ENCODE measurements at regions of chr6 and their contacts with region 1.

Region 1: DNA sequence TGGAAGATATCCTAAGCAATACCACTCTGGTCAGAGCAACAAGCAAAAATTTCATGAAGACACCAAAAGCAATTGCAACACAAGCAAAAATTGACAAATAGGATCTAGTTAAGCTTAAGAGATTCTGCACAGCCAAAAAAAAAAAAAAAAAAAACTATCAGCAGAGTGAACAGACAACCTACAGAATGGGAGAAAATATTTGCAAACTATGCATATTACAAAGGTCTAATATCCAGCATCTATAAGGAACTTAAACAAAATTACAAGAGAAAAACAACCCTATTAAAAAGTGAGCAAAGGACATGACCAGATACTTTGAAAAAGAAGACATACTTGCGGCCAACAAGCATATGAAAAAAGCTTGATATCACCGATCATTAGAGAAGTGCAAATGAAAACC is 20.0 kb upstream of the AHI1 start:
- DNase-seq: no peak
- ATAC-seq: no peak
- H3K4me3 ChIP-seq: no peak overlapping the region
- H3K27ac ChIP-seq: no peak overlapping the region
- H3K4me1 ChIP-seq: no peaks in the 10 kb centered on the region
- H3K27me3 ChIP-seq: no peaks in the 10 kb centered on the region
- CTCF ChIP-seq: no peak
- EP300 ChIP-seq: no peak
- POLR2A ChIP-seq: no peak
- RAD21 ChIP-seq: no peak

Region 2: GRCh38 chr6:135270676-135271536 is 246.6 kb before region 1 on chr6:
- CTCF ChIA-PET with region 1: no interaction called
- POLR2A ChIA-PET with region 1: no interaction called
- RAD21 ChIA-PET with region 1: no interaction called
- SMC1A ChIA-PET with region 1: no interaction called
- in situ Hi-C with region 1: no loop called
- intact Hi-C with region 1: no loop called
- DNase-seq: no peak
- ATAC-seq: no peak
- H3K4me3 ChIP-seq: no peak overlapping the region
- H3K27ac ChIP-seq: no peak overlapping the region
- H3K4me1 ChIP-seq: peaks cover 3% of the 10 kb centered on the region; the same call in 1 of the 2 replicates
- H3K27me3 ChIP-seq: no peaks in the 10 kb centered on the region
- CTCF ChIP-seq: no peak
- EP300 ChIP-seq: no peak
- POLR2A ChIP-seq: no peak
- RAD21 ChIP-seq: no peak

Region 3: GRCh38 chr6:135506270-135506997 is 11.1 kb before region 1 on chr6:
- CTCF ChIA-PET with region 1: interaction called, 10 read pairs
- POLR2A ChIA-PET with region 1: no interaction called
- RAD21 ChIA-PET with region 1: no interaction called
- SMC1A ChIA-PET with region 1: no interaction called
- in situ Hi-C with region 1: no loop called
- intact Hi-C with region 1: no loop called
- DNase-seq: no peak
- ATAC-seq: peak; percentile 96
- H3K4me3 ChIP-seq: no peak overlapping the region
- H3K27ac ChIP-seq: no peak overlapping the region
- H3K4me1 ChIP-seq: no peaks in the 10 kb centered on the region
- H3K27me3 ChIP-seq: no peaks in the 10 kb centered on the region
- CTCF ChIP-seq: peak; percentile 40 to 61 (median 50); a peak in 5 of 6 replicates
- EP300 ChIP-seq: no peak
- POLR2A ChIP-seq: no peak
- RAD21 ChIP-seq: peak; percentile 74

Measured in GM12878 (cell line).